ENCODE measurements at regions of chrX and their contacts with region 1.

Region 1: DNA sequence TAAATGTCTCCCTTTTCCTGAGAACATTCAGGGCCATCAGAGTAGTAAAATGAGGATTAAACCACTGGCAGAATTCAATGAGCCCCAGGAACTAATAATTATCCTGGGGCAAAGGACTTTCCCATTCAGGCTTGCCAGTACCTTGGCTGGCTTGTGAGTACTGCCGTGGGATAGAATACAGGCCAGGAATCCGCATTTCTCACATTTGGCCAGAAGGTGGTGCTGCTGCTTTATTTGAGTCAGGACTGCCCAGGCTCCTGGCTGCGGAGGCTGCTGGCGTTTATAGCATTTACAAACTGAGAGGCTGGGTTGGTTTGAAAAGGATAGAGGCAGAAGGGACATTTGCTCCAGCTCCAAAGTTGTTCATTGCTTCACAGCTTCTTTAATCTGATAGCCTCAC is 91.4 kb downstream of the RTL9 start:
- DNase-seq: peak; percentile 76 to 82 (median 79)
- ATAC-seq: peak; percentile 86 to 93 (median 92)
- H3K4me3 ChIP-seq: no peak overlapping the region
- H3K27ac ChIP-seq: peak overlapping the region in 2 of 3 donors; percentile 47 to 74
- H3K4me1 ChIP-seq: peaks cover 0 to 32% (median 3%) of the 10 kb centered on the region in 4 donors
- H3K27me3 ChIP-seq: no peaks in the 10 kb centered on the region
- CTCF ChIP-seq: peak; percentile 83 to 88 (median 86)
- POLR2A ChIP-seq: no peak

Region 2: GRCh38 chrX:110327336-110327735 is 122.7 kb before region 1 on chrX:
- intact Hi-C with region 1: no loop called
- DNase-seq: no peak
- ATAC-seq: no peak
- H3K4me3 ChIP-seq: no peak overlapping the region
- H3K27ac ChIP-seq: no peak overlapping the region
- H3K4me1 ChIP-seq: no peaks in the 10 kb centered on the region
- H3K27me3 ChIP-seq: peaks cover 0 to 3% of the 10 kb centered on the region in 2 donors
- CTCF ChIP-seq: no peak
- POLR2A ChIP-seq: no peak

Region 3: GRCh38 chrX:110665223-110666002 is 215.4 kb after region 1 on chrX:
- intact Hi-C with region 1: loop called in 1 of 2 experiments (anchors 10 kb)
- DNase-seq: peak; percentile 43 to 61 (median 47)
- ATAC-seq: peak; percentile 87 to 95 (median 94)
- H3K4me3 ChIP-seq: no peak overlapping the region
- H3K27ac ChIP-seq: no peak overlapping the region
- H3K4me1 ChIP-seq: peaks cover 0 to 6% (median 0%) of the 10 kb centered on the region in 4 donors
- H3K27me3 ChIP-seq: no peaks in the 10 kb centered on the region
- CTCF ChIP-seq: peak; percentile 48 to 75 (median 64)
- POLR2A ChIP-seq: no peak

Region 4: DNA sequence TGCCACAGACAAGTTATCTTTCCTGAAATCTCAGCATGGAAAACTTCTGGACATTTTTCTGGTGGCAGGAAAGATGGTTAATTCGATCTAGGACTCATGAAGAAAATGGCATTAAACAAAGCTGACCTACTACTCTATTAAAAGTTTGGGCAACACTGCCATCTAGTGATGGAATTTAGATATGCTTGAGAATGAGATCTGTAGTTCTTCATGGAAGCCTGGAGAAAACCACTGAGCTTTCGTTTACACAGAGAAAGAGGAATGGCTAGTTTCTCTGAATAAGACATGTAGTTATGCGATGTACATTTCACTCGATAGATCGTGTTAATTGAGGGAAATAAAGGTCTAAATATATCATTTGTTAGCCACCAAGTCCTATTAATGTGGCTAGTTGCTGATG is 397.3 kb after region 1 on chrX:
- intact Hi-C with region 1: loop called (anchors 5 to 10 kb)
- DNase-seq: no peak
- ATAC-seq: peak; percentile 79 to 92 (median 84)
- H3K4me3 ChIP-seq: no peak overlapping the region
- H3K27ac ChIP-seq: no peak overlapping the region
- H3K4me1 ChIP-seq: no peaks in the 10 kb centered on the region
- H3K27me3 ChIP-seq: no peaks in the 10 kb centered on the region
- CTCF ChIP-seq: peak; percentile 63 to 77 (median 76)
- POLR2A ChIP-seq: no peak

Region 5: DNA sequence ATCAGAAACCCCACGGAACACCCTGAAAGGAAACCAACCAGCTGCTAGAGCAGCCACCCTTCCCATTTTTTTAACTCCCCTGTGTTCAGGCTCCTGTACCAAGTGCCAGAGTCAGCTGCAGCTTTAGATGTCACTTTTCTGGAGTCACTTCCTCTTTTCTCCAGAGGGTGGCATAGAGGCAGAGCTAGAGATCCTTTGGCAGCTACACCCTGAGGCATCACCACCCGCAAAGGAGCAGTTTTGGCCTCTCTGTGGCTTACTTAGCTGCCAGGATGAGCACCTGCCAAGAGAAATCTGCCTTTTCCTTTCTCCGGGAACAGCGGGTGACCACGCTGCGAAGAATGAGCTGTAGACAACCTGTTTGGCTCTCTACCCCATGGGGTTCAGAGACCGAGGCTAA is 403.6 kb after region 1 on chrX:
- intact Hi-C with region 1: loop called in 1 of 2 experiments (anchors 10 kb)
- DNase-seq: peak in 1 of 3 donors; percentile 36
- ATAC-seq: peak; percentile 65 to 75 (median 70)
- H3K4me3 ChIP-seq: no peak overlapping the region
- H3K27ac ChIP-seq: no peak overlapping the region
- H3K4me1 ChIP-seq: no peaks in the 10 kb centered on the region
- H3K27me3 ChIP-seq: no peaks in the 10 kb centered on the region
- CTCF ChIP-seq: peak; percentile 30 to 45 (median 38)
- POLR2A ChIP-seq: no peak

Measured in right lobe of liver (tissue), 6 donors.